ENCODE measurements at regions of chr2 and their contacts with region 1.

Region 1: GRCh38 chr2:54455563-54456361 is at the start of gene SPTBN1:
- DNase-seq: peak; percentile 38 to 92
- H3K4me3 ChIP-seq: peak within 1 kb of the TSS; percentile 77 to 96
- H3K27ac ChIP-seq: peak within 1 kb of the TSS; percentile 88 to 92
- H3K4me1 ChIP-seq: peaks cover 0 to 11% of the 10 kb centered on the region in 2 donors
- H3K27me3 ChIP-seq: no peaks in the 10 kb centered on the region
- CTCF ChIP-seq: peak in 1 of 3 experiments; percentile 6
- total RNA-seq, gene SPTBN1: 246 TPM

Region 2: GRCh38 chr2:54208364-54209240 is 247.2 kb before region 1 on chr2:
- intact Hi-C with region 1: loop called (anchors 2 kb)
- DNase-seq: no peak
- H3K4me3 ChIP-seq: no peak overlapping the region
- H3K27ac ChIP-seq: peak overlapping the region; percentile 10 to 55
- H3K4me1 ChIP-seq: peaks cover 0 to 30% of the 10 kb centered on the region in 2 donors
- H3K27me3 ChIP-seq: no peaks in the 10 kb centered on the region
- CTCF ChIP-seq: no peak

Region 3: GRCh38 chr2:54387059-54387991 is 68.4 kb before region 1 on chr2:
- intact Hi-C with region 1: loop called (anchors 5 kb)
- DNase-seq: peak in 1 of 2 donors; percentile 70
- H3K4me3 ChIP-seq: no peak overlapping the region
- H3K27ac ChIP-seq: peak overlapping the region; percentile 7 to 54
- H3K4me1 ChIP-seq: peaks cover 0 to 10% of the 10 kb centered on the region in 2 donors
- H3K27me3 ChIP-seq: no peaks in the 10 kb centered on the region
- CTCF ChIP-seq: no peak

Region 4: DNA sequence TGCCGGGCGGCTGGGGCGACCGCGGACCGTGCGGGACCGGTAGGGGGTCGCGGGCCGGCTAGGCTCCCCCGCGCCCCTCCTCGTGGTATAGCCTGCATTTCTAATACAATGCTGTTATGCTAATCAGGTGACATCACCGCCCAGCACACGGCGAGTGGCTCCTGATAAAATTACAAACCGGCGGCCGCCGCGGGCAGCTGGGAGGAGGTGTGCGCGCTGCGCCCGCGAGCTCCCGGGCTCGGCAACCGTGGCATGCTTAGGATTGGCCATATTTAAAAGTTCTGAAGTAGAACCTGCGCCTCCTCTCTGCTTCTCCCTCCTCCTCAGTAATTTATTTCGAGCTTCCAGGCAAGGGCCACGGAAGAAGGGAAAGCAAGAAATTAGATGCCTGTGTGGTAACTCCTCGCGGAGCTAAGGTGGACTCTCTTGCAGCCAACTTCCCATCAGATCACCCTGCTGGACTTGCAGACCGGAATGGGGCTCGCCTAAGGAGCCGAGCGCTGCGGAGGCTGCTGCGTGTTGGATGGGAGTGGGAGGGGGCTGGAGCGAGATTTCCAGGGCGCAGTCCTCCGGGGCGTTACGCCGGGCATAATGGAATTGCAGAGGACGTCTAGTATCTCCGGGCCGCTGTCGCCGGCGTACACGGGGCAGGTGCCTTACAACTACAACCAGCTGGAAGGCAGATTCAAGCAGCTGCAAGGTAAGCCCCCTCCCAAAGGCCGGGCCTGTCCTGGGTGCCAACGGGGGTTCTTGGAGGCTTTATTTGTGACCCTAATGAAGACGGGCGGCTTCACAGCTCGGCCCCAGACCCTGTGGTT is 102.6 kb after region 1 on chr2:
- intact Hi-C with region 1: loop called (anchors 5 kb)
- DNase-seq: peak in 1 of 2 donors; percentile 82
- H3K4me3 ChIP-seq: peak overlapping the region; percentile 67 to 71
- H3K27ac ChIP-seq: peak overlapping the region; percentile 77 to 78
- H3K4me1 ChIP-seq: peaks cover 4 to 26% of the 10 kb centered on the region in 2 donors
- H3K27me3 ChIP-seq: no peaks in the 10 kb centered on the region
- CTCF ChIP-seq: no peak

Region 5: GRCh38 chr2:54634564-54635511 is 179.1 kb after region 1 on chr2:
- intact Hi-C with region 1: loop called (anchors 10 kb)
- DNase-seq: no peak
- H3K4me3 ChIP-seq: no peak overlapping the region
- H3K27ac ChIP-seq: peak overlapping the region; percentile 55 to 64
- H3K4me1 ChIP-seq: peaks cover 4 to 29% of the 10 kb centered on the region in 2 donors
- H3K27me3 ChIP-seq: no peaks in the 10 kb centered on the region
- CTCF ChIP-seq: no peak

Measured in ascending aorta (tissue), 2 donors.